Ascending aorta (tissue), 2 donors: ENCODE measurements at regions of chr4 and their contacts with region 1.

Region 1: DNA sequence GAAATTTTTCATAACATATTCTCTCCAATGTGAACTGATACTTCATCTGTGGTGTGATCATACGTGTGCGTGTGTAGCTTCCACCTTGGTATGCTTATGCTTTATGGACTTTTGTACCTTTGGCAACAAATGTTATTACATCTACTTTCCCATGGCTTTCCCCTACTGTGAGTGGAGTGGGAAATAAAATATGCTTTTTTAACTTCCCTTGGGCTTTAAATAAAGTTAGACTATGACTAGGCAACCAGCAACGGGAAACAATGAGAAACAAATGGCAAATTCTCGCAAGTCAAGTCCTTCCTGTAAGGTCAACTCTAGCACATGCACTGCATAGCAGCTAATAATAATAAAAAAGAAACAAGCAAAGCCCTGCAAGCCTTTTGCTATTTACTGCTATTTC is 205.0 kb upstream of the PDE5A start:
- DNase-seq: peak in 1 of 2 donors; percentile 66
- H3K4me3 ChIP-seq: no peak overlapping the region
- H3K27ac ChIP-seq: peak overlapping the region; percentile 79 to 80
- H3K4me1 ChIP-seq: peaks cover 0 to 23% of the 10 kb centered on the region in 2 donors
- H3K27me3 ChIP-seq: no peaks in the 10 kb centered on the region
- CTCF ChIP-seq: no peak

Region 2: DNA sequence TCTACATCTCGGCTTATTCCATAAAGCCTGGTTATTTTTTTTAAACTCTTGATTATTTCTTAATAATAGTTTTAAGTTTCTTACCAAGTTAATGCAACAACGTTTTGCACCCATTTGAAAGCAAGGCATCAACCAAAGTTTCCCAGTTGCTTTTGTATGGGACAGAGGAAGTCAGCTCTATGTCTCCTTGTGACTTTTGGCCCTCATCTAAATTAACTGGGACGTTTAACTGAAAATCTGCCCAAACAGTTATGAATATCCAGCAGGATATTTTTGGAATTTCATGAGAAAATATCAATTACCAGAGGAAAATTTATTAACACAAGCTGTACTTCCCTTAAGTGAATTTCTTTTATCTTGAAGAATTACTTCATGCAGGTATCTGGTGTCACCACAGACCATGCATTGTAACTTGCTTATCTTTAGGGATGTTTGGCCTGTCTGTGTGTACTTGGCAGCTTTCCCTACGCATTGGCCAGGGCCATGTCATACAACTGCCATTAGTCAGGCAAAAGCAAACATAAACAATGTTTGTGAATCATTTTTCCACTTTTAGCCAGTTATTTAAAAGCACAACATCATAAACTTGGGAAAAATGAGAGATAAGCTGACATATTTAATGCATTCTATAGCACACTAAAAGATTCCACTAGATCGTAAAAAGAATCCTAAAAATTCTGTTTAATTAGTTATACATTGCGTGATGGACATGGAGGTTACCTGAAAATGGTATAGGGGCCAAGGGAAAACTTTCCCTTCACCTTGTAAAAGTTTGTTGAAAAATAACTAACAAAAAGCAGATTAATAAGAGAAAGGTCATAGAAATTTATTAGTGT is 103.6 kb before region 1 on chr4:
- intact Hi-C with region 1: loop called (anchors 2 kb)
- DNase-seq: peak; percentile 11 to 90
- H3K4me3 ChIP-seq: peak overlapping the region in 1 of 2 donors; percentile 6
- H3K27ac ChIP-seq: peak overlapping the region; percentile 89 to 90
- H3K4me1 ChIP-seq: peaks cover 12 to 74% of the 10 kb centered on the region in 2 donors
- H3K27me3 ChIP-seq: no peaks in the 10 kb centered on the region
- CTCF ChIP-seq: no peak

Region 3: DNA sequence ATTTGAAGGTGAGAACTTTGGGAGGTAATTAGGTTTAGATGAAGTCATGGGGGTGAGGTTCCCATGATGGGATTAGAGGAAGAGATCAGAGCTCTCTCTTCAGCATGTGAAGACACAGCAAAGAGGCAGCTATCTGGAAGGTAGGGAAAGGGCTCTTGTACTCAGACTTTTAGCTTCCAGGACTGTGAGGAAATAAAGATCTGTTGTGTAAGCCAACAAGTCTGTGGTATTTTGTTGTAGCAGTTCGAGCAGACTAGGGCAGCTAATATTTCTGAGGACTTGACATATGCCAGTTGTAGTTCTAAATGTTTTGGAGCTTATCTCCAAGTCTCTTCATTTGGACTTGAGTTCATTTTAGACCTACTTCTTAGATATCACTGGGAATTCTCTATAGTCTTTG is 67.7 kb before region 1 on chr4:
- intact Hi-C with region 1: no loop called
- DNase-seq: no peak
- H3K4me3 ChIP-seq: no peak overlapping the region
- H3K27ac ChIP-seq: no peak overlapping the region
- H3K4me1 ChIP-seq: peaks cover 0 to 6% of the 10 kb centered on the region in 2 donors
- H3K27me3 ChIP-seq: no peaks in the 10 kb centered on the region
- CTCF ChIP-seq: no peak

Region 4: GRCh38 chr4:119794704-119795103 is 38.9 kb before region 1 on chr4:
- intact Hi-C with region 1: loop called (anchors 5 kb)
- DNase-seq: no peak
- H3K4me3 ChIP-seq: no peak overlapping the region
- H3K27ac ChIP-seq: no peak overlapping the region
- H3K4me1 ChIP-seq: no peaks in the 10 kb centered on the region
- H3K27me3 ChIP-seq: no peaks in the 10 kb centered on the region
- CTCF ChIP-seq: no peak

Region 5: DNA sequence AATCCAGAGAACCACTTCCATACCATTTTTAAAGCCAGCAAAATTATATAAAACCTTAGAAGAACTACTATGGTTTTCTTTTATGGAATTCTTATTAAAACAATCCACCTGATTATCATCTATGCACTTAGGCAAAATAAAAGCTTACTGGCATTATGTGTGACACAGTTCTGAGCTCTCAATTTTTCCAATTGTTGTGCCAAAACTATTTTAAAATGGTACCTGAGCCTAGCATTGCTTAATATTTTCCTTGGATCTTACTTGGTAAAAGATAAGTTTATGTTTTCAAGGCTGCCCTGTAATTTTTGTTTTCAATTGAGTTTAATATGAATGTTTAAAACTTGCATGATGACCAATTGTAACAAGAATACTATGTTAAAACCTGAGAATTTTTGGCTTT is 31.8 kb after region 1 on chr4:
- intact Hi-C with region 1: loop called (anchors 2 kb)
- DNase-seq: no peak
- H3K4me3 ChIP-seq: no peak overlapping the region
- H3K27ac ChIP-seq: peak overlapping the region; percentile 74 to 78
- H3K4me1 ChIP-seq: peaks cover 0 to 22% of the 10 kb centered on the region in 2 donors
- H3K27me3 ChIP-seq: no peaks in the 10 kb centered on the region
- CTCF ChIP-seq: no peak

Region 6: GRCh38 chr4:120109406-120109805 is 275.8 kb after region 1 on chr4:
- intact Hi-C with region 1: no loop called
- DNase-seq: no peak
- H3K4me3 ChIP-seq: no peak overlapping the region
- H3K27ac ChIP-seq: no peak overlapping the region
- H3K4me1 ChIP-seq: no peaks in the 10 kb centered on the region
- H3K27me3 ChIP-seq: no peaks in the 10 kb centered on the region
- CTCF ChIP-seq: no peak

Region 7: GRCh38 chr4:120918788-120919187 is 1085.2 kb after region 1 on chr4:
- intact Hi-C with region 1: no loop called
- DNase-seq: no peak
- H3K4me3 ChIP-seq: no peak overlapping the region
- H3K27ac ChIP-seq: no peak overlapping the region
- H3K4me1 ChIP-seq: peaks cover 0 to 12% of the 10 kb centered on the region in 2 donors
- H3K27me3 ChIP-seq: no peaks in the 10 kb centered on the region
- CTCF ChIP-seq: no peak